ENCODE measurements at regions of chr2 and their contacts with region 1.

Region 1: DNA sequence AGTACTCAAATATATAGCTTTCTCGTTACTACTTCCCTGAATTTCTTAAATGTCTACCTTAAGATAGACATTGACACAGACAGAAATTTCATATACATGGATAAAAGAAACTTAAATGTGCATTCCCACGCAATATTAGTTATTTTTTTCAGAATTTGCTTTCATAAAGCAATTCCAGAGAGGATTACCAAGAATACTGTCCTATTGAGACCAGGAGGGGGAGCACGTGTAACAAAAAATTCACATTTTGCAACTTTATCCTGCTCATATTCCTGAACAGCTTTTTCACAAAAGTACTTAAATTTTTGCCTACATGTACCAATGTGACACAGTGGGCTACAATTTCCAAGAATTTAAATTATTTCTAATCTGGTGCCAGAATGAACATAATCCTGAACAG is 30.7 kb upstream of the ERCC3 start:
- DNase-seq: no peak
- H3K4me3 ChIP-seq: no peak overlapping the region
- H3K27ac ChIP-seq: no peak overlapping the region
- H3K27me3 ChIP-seq: no peaks in the 10 kb centered on the region
- CTCF ChIP-seq: peak; percentile 49 to 85 (median 69)

Region 2: DNA sequence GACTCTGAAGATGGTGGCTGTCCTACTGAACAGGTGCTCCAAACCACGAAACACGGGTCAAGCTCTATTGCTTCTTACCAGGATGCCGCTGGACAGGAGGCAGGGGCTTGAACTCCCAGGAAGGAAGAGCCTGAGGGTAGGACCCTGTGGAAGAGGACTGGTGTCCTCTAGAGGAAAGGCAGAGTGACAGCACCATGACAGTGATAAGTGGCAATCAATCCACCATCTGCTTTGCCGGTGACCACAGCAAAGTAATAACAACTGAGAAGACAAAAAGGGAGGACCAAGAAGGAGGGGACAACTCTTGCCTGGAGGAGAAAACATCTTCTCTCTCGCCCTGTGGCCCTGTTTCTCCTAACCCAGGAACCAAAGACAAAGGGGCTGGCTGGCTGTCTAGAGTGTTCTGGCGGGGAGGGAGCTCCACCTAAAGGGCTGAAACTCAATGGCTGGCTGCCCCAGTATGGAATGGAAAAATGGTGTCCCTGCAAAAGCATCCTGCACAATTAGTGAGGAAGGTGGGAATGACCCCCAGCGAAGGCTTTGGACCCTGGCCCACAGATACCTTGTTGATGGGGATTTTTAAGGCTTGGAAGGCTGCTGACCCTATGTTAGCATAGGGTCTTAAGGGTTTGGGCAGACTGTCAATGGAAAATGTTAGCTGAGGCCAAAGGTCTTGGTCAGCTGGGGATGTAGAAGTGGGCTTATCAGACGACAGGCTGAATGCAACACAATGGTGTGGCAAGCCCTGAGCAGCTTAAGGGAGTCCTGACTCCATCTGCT is 128.9 kb after region 1 on chr2:
- intact Hi-C with region 1: loop called in 1 of 2 experiments (anchors 10 kb)
- DNase-seq: no peak
- H3K4me3 ChIP-seq: no peak overlapping the region
- H3K27ac ChIP-seq: no peak overlapping the region
- H3K27me3 ChIP-seq: no peaks in the 10 kb centered on the region
- CTCF ChIP-seq: peak in 22 of 56 donors; percentile 9 to 46 (median 24)

Region 3: GRCh38 chr2:127479219-127479825 is 154.7 kb after region 1 on chr2:
- intact Hi-C with region 1: loop called (anchors 1 to 10 kb)
- DNase-seq: no peak
- H3K4me3 ChIP-seq: no peak overlapping the region
- H3K27ac ChIP-seq: peak overlapping the region in 1 of 59 donors; percentile 32
- H3K27me3 ChIP-seq: no peaks in the 10 kb centered on the region
- CTCF ChIP-seq: peak; percentile 34 to 89 (median 68)

Region 4: GRCh38 chr2:127695491-127696472 is 371.1 kb after region 1 on chr2:
- intact Hi-C with region 1: loop called in 1 of 2 experiments (anchors 10 kb)
- DNase-seq: peak in 8 of 10 donors; percentile 43 to 73 (median 62)
- H3K4me3 ChIP-seq: peak overlapping the region in 54 of 59 donors; percentile 14 to 62 (median 45)
- H3K27ac ChIP-seq: no peak overlapping the region
- H3K27me3 ChIP-seq: no peaks in the 10 kb centered on the region
- CTCF ChIP-seq: peak in 55 of 56 donors; percentile 28 to 88 (median 62)

Measured in dorsolateral prefrontal cortex (tissue), 120 donors.